Posterior vena cava (tissue), 2 donors: ENCODE measurements at regions of chr18 and their contacts with region 1.

Region 1: GRCh38 chr18:354003-354402 is 86.2 kb upstream of the THOC1 start:
- DNase-seq: no peak

Region 2: DNA sequence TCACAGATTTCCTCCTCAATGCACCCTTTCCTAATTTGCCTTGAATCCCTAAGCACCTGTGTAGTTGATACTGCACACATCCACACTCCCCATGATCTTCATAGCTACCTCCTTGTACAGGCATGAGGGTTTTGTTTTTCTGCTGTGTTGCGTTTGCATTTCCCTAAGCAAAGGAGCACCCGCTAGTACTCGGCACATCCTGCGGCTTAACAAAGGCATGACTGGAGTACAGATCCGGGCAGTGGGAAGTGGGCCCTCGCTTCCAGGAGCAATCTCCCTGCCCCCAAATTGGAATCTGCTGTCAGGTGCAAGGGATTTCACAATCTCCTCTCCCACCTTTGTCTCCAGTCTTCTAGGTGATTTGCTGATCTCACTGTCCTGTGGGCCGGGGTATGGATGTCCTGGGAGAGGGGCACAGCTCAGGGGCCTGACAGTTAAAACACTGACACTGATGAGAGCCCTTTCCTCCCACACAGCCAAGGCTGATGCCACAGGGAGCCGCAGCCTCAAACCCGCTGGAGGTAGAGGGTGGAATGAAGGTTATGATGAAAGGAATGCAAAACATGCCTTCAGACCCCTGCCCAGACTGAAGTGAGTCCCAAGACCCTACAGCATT is 12.6 kb after region 1 on chr18:
- intact Hi-C with region 1: loop called in 1 of 2 experiments (anchors 1 kb)
- DNase-seq: no peak

Region 3: GRCh38 chr18:1270080-1270479 is 916.1 kb after region 1 on chr18:
- intact Hi-C with region 1: no loop called
- DNase-seq: no peak